ENCODE measurements at regions of chr5 and their contacts with region 1.

Region 1: GRCh38 chr5:3612591-3613042 is 17.0 kb downstream of the IRX1 start:
- DNase-seq: peak; percentile 98
- H3K4me3 ChIP-seq: no peak overlapping the region
- H3K27ac ChIP-seq: peak overlapping the region; percentile 79
- H3K4me1 ChIP-seq: peaks cover 74% of the 10 kb centered on the region
- H3K27me3 ChIP-seq: no peaks in the 10 kb centered on the region
- CTCF ChIP-seq: no peak

Region 2: DNA sequence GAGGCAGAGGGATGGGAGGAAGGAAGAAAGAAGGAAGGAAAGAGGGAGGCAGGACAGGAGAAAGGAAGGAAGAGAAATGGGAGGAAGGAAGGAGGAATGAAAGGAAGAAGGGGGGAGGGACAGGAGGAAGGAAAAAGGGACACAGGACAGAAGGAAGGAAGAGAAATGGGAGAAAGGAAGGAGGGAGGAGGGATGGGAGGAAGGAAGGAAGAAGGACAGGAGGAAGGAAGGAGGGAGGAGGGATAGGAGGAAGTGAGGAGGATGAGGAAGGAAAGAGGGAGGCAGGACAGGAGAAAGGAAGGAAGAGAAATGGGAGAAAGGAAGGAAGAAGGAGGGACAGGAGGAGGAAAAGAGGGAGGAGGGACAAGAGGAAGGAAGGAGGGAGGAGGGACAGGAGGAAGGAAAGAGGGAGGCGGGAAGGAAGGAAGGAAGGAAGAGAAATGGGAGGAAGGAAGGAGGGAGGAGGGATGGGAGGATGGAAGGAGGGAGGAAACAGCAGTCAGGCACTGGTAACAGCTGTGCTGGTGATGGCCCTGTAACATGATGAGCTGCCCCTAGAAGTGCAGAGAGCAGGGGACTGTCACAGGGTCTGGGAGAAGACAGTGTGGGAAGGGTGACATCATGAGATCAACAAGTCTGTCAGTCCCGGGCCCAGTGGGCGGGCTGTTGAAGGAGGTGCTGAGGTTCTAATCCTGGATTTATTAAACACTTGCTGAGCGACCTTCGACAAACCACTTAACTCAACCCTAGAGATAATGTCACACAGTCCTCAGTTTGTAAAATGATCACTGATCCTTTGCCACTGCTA is 27.7 kb before region 1 on chr5:
- CTCF ChIA-PET with region 1: no interaction called
- dilution Hi-C with region 1: no loop called
- in situ Hi-C with region 1: no loop called
- intact Hi-C with region 1: no loop called
- DNase-seq: no peak
- H3K4me3 ChIP-seq: no peak overlapping the region
- H3K27ac ChIP-seq: no peak overlapping the region
- H3K4me1 ChIP-seq: no peaks in the 10 kb centered on the region
- H3K27me3 ChIP-seq: no peaks in the 10 kb centered on the region
- CTCF ChIP-seq: no peak

Region 3: DNA sequence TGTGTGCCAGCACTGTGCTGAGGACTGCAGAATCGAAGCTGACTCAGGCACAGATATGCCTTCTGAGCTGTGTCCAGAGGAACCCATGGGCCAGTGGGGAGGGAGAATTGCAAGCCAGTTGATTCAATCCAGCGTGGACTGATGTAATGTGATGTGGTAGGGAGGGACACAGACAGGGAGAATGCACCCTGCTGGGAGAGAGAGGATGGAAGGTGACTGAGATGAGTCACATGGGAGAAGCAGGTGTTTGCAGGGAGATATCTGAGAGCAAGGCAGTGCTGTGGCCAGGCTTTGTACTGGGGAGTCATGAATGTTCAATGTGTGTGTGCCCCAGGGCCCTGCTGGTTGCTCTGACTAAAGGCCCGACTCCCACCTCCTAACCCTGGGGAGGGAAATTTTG is 58.7 kb after region 1 on chr5:
- CTCF ChIA-PET with region 1: no interaction called
- dilution Hi-C with region 1: no loop called
- in situ Hi-C with region 1: no loop called
- intact Hi-C with region 1: no loop called
- DNase-seq: peak; percentile 70
- H3K4me3 ChIP-seq: no peak overlapping the region
- H3K27ac ChIP-seq: no peak overlapping the region
- H3K4me1 ChIP-seq: no peaks in the 10 kb centered on the region
- H3K27me3 ChIP-seq: no peaks in the 10 kb centered on the region
- CTCF ChIP-seq: no peak

Region 4: GRCh38 chr5:3694819-3695218 is 82.2 kb after region 1 on chr5:
- CTCF ChIA-PET with region 1: interaction called, 4 read pairs
- dilution Hi-C with region 1: no loop called
- in situ Hi-C with region 1: no loop called
- intact Hi-C with region 1: loop called (anchors 10 kb)
- DNase-seq: peak; percentile 93
- H3K4me3 ChIP-seq: no peak overlapping the region
- H3K27ac ChIP-seq: peak overlapping the region; percentile 45
- H3K4me1 ChIP-seq: peaks cover 17% of the 10 kb centered on the region
- H3K27me3 ChIP-seq: no peaks in the 10 kb centered on the region
- CTCF ChIP-seq: no peak

Region 5: DNA sequence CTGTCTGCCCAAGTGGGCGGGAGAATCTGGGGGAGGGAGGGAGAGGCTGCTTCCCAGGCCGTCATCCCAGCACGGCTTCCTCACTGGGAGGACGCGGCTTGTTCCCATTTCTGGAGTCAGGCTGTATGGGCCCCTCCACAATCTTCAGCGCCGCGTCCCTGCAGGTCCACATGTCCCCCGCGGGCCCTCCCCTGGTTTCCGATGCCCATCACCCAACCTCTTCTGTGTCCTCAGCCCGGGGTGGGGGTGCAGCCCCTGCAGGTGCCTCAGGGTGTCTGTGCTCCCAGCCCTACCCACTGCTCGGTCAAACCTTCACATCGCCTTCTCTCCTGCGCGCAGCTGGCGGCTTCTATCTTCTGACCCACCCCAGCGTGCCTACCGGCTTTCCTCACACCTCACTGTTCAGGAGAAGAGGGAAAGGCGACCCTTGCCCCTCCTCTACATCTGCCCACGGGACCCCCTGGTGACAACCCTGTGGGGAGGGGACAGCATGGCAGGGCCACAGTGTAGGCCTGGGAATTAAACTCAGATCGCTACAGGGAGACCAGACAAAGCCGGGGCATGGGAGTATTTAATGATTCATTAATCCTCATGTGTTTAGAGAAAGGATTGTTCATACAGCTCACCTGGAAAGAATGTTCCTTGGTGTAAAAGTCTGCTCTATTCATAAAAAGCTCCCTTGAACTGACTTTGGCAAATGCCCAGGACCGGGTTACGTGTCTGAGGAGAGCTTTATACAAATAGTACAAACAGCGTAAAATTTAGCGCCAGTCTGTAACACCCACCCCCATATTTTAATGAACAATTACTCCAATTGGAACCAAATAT is 128.1 kb after region 1 on chr5:
- CTCF ChIA-PET with region 1: no interaction called
- dilution Hi-C with region 1: no loop called
- in situ Hi-C with region 1: no loop called
- intact Hi-C with region 1: loop called (anchors 2 kb)
- DNase-seq: peak; percentile 95
- H3K4me3 ChIP-seq: no peak overlapping the region
- H3K27ac ChIP-seq: peak overlapping the region; percentile 95
- H3K4me1 ChIP-seq: peaks cover 28% of the 10 kb centered on the region
- H3K27me3 ChIP-seq: no peaks in the 10 kb centered on the region
- CTCF ChIP-seq: no peak

Region 6: GRCh38 chr5:4082966-4083564 is 470.4 kb after region 1 on chr5:
- CTCF ChIA-PET with region 1: no interaction called
- dilution Hi-C with region 1: no loop called
- in situ Hi-C with region 1: loop called (anchors 10 to 25 kb)
- intact Hi-C with region 1: no loop called
- DNase-seq: peak; percentile 94
- H3K4me3 ChIP-seq: no peak overlapping the region
- H3K27ac ChIP-seq: peak overlapping the region; percentile 96
- H3K4me1 ChIP-seq: peaks cover 43% of the 10 kb centered on the region
- H3K27me3 ChIP-seq: no peaks in the 10 kb centered on the region
- CTCF ChIP-seq: no peak